Activated CD4-positive, alpha-beta T cell treated with anti-CD3 and anti-CD28 coated beads for 36 hours (primary cell): ENCODE measurements at regions of chr15 and their contacts with region 1.

Region 1: DNA sequence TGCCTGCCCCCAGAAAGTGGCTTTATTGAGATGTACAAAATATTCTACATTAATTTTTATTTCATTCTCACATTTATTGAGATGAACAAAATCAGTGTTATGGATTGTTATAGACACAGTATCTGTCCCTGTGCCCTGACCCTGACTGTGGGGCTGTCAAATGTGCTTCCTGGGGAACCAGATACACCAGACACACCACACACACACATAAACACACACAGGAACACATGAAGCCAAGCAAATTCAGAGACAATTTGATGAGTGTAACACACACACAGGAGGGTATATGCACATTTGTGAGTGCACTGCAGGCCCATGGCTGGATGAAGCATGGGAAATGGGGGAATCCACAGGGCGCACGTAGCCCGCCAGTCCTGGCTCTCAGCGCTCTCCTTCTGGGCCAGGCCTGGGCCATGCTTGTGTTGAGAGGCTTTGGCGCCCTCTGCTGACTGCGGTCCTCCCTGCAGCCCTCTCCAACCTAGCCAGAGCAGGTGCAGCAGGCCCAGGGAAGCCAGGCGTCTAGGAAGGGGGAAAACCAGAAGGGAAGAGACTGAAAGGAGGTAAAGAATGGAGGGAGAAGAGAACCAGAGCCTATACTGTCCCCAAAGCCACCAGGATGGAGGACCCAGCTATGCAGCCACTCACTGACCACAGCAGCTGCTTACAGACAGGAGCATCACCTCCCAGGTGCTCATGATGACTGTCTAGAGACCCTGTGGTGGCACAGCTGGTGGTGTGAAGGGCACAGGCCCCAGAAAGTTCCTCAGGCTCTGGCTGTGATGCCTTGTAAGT is 18.0 kb upstream of the LOXL1 start:
- DNase-seq: peak; percentile 90
- ATAC-seq: peak; percentile 100
- H3K4me3 Mint-ChIP-seq: no peak overlapping the region
- H3K27ac Mint-ChIP-seq: no peak overlapping the region
- H3K4me1 Mint-ChIP-seq: no peaks in the 10 kb centered on the region
- H3K27me3 Mint-ChIP-seq: no peaks in the 10 kb centered on the region

Region 2: GRCh38 chr15:73866881-73867410 is 41.3 kb before region 1 on chr15:
- CTCF ChIA-PET with region 1: interaction called, 11 read pairs
- POLR2A ChIA-PET with region 1: no interaction called
- intact Hi-C with region 1: no loop called
- DNase-seq: no peak
- ATAC-seq: no peak
- H3K4me3 Mint-ChIP-seq: no peak overlapping the region
- H3K27ac Mint-ChIP-seq: no peak overlapping the region
- H3K4me1 Mint-ChIP-seq: peaks cover 5% of the 10 kb centered on the region
- H3K27me3 Mint-ChIP-seq: peaks cover 14% of the 10 kb centered on the region

Region 3: DNA sequence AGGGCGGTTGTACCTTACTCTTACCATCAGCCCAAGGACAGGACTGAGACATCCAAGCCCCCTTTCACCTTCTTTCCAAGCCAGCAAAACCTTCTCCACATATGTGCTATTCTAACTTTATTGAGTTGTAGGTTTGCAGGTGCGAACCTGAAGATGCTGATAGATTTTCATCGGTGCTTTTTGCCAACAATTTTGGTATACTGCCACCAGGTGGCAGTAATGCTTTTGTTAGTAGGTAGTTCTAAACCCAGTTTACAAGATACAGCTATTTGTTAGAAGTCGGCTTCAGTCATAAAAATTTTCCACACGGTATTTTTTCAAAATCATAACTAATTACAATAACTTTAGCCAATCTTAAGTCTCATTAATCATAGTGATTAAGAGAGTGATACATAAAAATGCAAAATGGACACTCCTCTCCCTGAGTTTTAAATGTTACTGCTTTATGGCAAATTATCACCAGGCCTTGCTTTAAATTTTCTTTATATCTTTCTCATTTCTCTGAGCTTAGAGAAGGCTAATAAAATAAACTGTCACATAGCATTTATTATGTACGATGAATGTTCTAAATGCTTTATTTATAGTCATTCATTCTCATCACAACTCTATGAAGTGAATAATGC is 34.2 kb before region 1 on chr15:
- CTCF ChIA-PET with region 1: interaction called, 70 read pairs
- POLR2A ChIA-PET with region 1: no interaction called
- intact Hi-C with region 1: loop called (anchors 1 to 2 kb)
- DNase-seq: peak; percentile 50
- ATAC-seq: no peak
- H3K4me3 Mint-ChIP-seq: no peak overlapping the region
- H3K27ac Mint-ChIP-seq: no peak overlapping the region
- H3K4me1 Mint-ChIP-seq: no peaks in the 10 kb centered on the region
- H3K27me3 Mint-ChIP-seq: peaks cover 26% of the 10 kb centered on the region

Region 4: GRCh38 chr15:73897441-73898261 is 10.6 kb before region 1 on chr15:
- CTCF ChIA-PET with region 1: interaction called, 24 read pairs
- POLR2A ChIA-PET with region 1: interaction called, 3 read pairs
- intact Hi-C with region 1: loop called in 1 of 2 experiments (anchors 1 kb)
- DNase-seq: peak; percentile 85
- ATAC-seq: peak; percentile 95
- H3K4me3 Mint-ChIP-seq: no peak overlapping the region
- H3K27ac Mint-ChIP-seq: no peak overlapping the region
- H3K4me1 Mint-ChIP-seq: no peaks in the 10 kb centered on the region
- H3K27me3 Mint-ChIP-seq: no peaks in the 10 kb centered on the region